Prostate gland (tissue), 2 donors: ENCODE measurements at regions of chr1 and their contacts with region 1.

Region 1: GRCh38 chr1:85259118-85259911 is at the start of gene C1orf52:
- DNase-seq: peak; percentile 94
- H3K4me3 ChIP-seq: peak within 1 kb of the TSS; percentile 79 to 91
- H3K27ac ChIP-seq: peak within 1 kb of the TSS; percentile 76 to 77
- H3K4me1 ChIP-seq: peaks cover 2% of the 10 kb centered on the region
- H3K27me3 ChIP-seq: no peaks in the 10 kb centered on the region
- CTCF ChIP-seq: peak; percentile 94 to 99 (median 98)
- POLR2A ChIP-seq: peak; percentile 58
- total RNA-seq, gene C1orf52: 12.7 to 30.5 TPM

Region 2: DNA sequence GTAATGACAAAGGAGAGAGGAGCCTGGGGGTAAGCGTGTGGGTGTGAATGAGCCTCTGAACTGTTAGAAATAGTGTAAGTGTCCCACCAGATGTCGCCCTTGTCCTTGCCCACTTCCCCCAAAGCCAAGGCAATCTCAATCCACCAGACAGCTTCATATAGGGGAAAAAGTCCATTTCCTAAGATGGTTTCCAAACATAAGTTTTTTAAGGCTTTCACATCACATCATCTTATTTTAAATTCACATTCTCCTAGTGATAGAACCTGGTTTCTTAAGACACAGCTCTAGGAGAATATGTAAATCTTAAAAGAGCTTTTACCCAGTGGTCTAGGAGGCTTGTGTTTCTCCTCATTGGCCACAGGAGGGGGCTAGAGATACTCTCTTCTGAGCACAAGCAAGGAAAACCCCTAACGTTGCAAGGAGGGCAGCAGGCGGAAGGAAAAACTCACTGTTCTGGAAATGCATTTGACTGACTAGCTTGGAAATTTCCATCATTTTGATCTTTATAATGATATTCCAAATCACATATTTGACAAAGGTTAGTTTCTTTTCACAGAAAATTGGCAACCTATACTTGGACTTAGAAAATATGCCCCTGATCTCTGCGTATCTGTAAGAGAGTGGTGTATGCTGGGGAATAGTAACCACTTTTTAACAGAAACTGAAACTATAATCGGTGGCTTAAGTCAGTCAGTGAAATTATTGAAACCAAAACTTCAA is 314.4 kb before region 1 on chr1:
- intact Hi-C with region 1: loop called (anchors 5 kb)
- DNase-seq: peak; percentile 69
- H3K4me3 ChIP-seq: peak overlapping the region; percentile 28
- H3K27ac ChIP-seq: peak overlapping the region; percentile 55 to 60
- H3K4me1 ChIP-seq: no peaks in the 10 kb centered on the region
- H3K27me3 ChIP-seq: no peaks in the 10 kb centered on the region
- CTCF ChIP-seq: peak; percentile 52 to 93 (median 89)
- POLR2A ChIP-seq: no peak

Region 3: DNA sequence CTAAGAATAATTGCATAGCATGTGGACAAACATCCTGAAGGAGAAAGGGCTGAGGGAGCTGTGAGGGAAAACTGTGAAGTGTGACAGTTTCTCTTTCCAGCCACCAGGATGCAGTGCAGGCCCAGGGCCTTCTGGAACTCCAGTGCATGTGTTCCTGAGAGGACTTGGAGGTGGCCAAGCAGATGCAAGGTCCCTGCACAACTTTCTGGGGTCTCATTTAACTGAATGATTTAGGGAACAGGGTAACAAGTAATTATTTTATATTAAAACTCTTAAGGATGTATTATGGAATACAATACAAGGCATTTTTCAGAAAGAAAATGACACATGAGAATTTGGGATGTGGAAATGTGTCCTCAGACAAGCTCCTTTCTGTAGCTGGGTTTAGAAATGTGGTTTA is 149.8 kb before region 1 on chr1:
- intact Hi-C with region 1: loop called (anchors 2 kb)
- DNase-seq: peak; percentile 43
- H3K4me3 ChIP-seq: no peak overlapping the region
- H3K27ac ChIP-seq: no peak overlapping the region
- H3K4me1 ChIP-seq: no peaks in the 10 kb centered on the region
- H3K27me3 ChIP-seq: no peaks in the 10 kb centered on the region
- CTCF ChIP-seq: peak; percentile 52 to 83 (median 72)
- POLR2A ChIP-seq: no peak

Region 4: DNA sequence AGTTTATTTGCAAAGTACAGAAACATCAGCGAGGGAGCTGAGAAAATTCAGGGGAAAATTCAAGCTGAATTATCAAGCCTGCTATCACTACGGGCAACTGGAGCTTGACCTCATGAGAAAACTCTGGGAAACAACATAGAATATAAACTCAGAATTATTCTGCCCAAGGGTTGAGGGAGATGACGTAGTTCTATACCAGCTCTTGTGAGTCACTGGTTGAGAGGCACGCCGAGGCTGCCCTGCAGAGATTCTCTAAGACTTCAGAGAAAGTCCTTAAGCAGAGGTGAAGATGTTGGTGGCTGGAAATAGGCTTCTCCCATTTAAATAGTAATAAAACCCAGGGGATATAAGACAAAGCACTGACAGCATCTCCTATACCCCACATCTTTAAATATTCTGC is 70.8 kb before region 1 on chr1:
- intact Hi-C with region 1: no loop called
- DNase-seq: no peak
- H3K4me3 ChIP-seq: no peak overlapping the region
- H3K27ac ChIP-seq: no peak overlapping the region
- H3K4me1 ChIP-seq: no peaks in the 10 kb centered on the region
- H3K27me3 ChIP-seq: no peaks in the 10 kb centered on the region
- CTCF ChIP-seq: no peak
- POLR2A ChIP-seq: no peak

Region 5: DNA sequence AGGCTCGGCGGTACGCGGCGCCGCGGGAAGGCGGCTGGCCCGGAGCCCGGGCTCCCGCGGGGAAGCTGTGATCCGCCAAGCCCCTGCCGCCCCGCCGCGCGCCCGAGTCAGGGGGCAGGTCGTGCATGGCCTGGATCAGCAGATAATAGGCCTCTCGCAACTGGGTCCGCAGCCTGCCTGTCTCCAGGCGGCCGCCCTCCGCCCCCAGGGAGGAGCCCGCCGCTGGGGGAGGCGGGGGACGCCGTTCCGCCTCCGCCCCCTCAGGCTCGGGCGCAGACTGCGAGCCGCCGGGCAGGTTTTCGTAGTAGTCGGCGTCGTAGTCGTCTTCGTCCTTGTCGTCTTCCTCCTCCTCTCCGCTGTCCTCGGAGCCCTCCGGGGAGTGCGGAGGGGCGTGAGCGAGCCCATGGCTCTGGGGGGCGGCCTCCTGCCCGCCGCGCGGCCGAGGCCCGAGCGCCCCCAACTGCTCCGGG is 58.4 kb before region 1 on chr1 and contains the start of gene SYDE2:
- intact Hi-C with region 1: loop called (anchors 5 kb)
- DNase-seq: peak; percentile 71
- H3K4me3 ChIP-seq: peak within 1 kb of the TSS; percentile 87 to 97
- H3K27ac ChIP-seq: peak within 1 kb of the TSS; percentile 94 to 98
- H3K4me1 ChIP-seq: peaks cover 4% of the 10 kb centered on the region
- H3K27me3 ChIP-seq: no peaks in the 10 kb centered on the region
- CTCF ChIP-seq: peak in 2 of 4 experiments; percentile 8 to 34
- POLR2A ChIP-seq: peak; percentile 57
- total RNA-seq, gene SYDE2: 6.6 to 8.4 TPM

Region 6: DNA sequence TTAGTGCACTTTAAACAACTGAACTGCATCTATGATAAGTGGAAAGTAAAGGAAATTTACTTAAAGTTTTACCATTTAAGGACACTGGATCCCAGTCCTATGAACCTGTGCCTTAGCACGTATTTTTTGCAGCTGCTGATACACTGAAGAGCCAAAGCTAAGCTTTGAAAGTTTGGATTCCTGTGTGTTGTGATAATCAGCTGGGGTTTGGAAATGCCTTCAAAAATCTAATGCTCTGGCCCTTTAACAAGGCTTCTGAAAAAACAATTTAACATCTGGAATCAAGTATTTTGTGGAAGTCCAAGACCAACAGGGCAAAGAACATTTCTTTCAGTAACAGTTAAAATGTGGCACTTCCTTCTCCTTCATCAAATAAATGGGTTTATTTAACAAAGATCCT is 153.9 kb after region 1 on chr1:
- intact Hi-C with region 1: no loop called
- DNase-seq: no peak
- H3K4me3 ChIP-seq: no peak overlapping the region
- H3K27ac ChIP-seq: no peak overlapping the region
- H3K4me1 ChIP-seq: no peaks in the 10 kb centered on the region
- H3K27me3 ChIP-seq: no peaks in the 10 kb centered on the region
- CTCF ChIP-seq: no peak
- POLR2A ChIP-seq: no peak